ENCODE measurements at regions of chr11 and their contacts with region 1.

Region 1: GRCh38 chr11:10366568-10367370 is 61.9 kb downstream of the ADM start:
- DNase-seq: peak; percentile 68 to 87 (median 75)
- ATAC-seq: peak; percentile 99
- H3K4me3 ChIP-seq: no peak overlapping the region
- H3K27ac ChIP-seq: no peak overlapping the region
- H3K4me1 ChIP-seq: peaks cover 3 to 4% of the 10 kb centered on the region in 2 experiments; a peak in 3 of 5 replicates
- H3K27me3 ChIP-seq: peaks cover 0 to 4% of the 10 kb centered on the region in 2 experiments; a peak in 1 of 5 replicates
- CTCF ChIP-seq: peak; percentile 91 to 93 (median 91)
- EP300 ChIP-seq: 0 out of 2 replicates have a peak, but pooled peaks have one; percentile 14
- POLR2A ChIP-seq: no peak
- RAD21 ChIP-seq: peak; percentile 68 to 85

Region 2: DNA sequence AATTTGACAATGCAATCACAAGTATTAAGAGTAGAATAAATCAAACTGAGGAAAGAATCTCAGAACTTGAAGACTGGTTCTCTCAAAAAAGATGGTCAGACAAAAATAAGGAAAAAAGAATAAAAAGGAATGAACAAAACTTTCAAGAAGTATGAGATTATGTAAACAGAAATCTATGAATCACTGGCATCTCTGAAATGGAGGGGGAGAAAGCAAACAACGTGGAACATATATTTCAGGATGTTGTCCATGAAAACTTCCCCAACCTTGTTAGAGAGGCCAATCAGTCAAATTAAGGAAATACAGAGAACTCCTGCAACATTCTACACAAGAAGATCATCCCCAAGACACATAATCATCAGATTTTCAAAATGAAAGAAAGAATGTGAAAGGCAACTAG is 308.4 kb before region 1 on chr11:
- CTCF ChIA-PET with region 1: no interaction called
- POLR2A ChIA-PET with region 1: no interaction called
- in situ Hi-C with region 1: no loop called
- intact Hi-C with region 1: no loop called
- DNase-seq: no peak
- ATAC-seq: no peak
- H3K4me3 ChIP-seq: no peak overlapping the region
- H3K27ac ChIP-seq: no peak overlapping the region
- H3K4me1 ChIP-seq: no peaks in the 10 kb centered on the region
- H3K27me3 ChIP-seq: no peaks in the 10 kb centered on the region
- CTCF ChIP-seq: no peak
- EP300 ChIP-seq: no peak
- POLR2A ChIP-seq: no peak
- RAD21 ChIP-seq: no peak

Region 3: GRCh38 chr11:10208131-10208575 is 158.6 kb before region 1 on chr11:
- CTCF ChIA-PET with region 1: interaction called, 5 read pairs
- POLR2A ChIA-PET with region 1: no interaction called
- in situ Hi-C with region 1: no loop called
- intact Hi-C with region 1: loop called (anchors 5 kb)
- DNase-seq: peak; percentile 35 to 45 (median 40)
- ATAC-seq: peak; percentile 77
- H3K4me3 ChIP-seq: no peak overlapping the region
- H3K27ac ChIP-seq: no peak overlapping the region
- H3K4me1 ChIP-seq: no peaks in the 10 kb centered on the region
- H3K27me3 ChIP-seq: no peaks in the 10 kb centered on the region
- CTCF ChIP-seq: peak; percentile 47 to 73 (median 63); a peak in 5 of 6 replicates
- EP300 ChIP-seq: no peak
- POLR2A ChIP-seq: no peak
- RAD21 ChIP-seq: peak; percentile 58 to 67; a peak in 3 of 4 replicates

Region 4: GRCh38 chr11:10307442-10308207 is 59.1 kb before region 1 on chr11:
- CTCF ChIA-PET with region 1: no interaction called
- POLR2A ChIA-PET with region 1: no interaction called
- in situ Hi-C with region 1: no loop called
- intact Hi-C with region 1: loop called (anchors 1 kb)
- DNase-seq: peak; percentile 81 to 87 (median 84)
- ATAC-seq: peak; percentile 94
- H3K4me3 ChIP-seq: peak overlapping the region; percentile 32
- H3K27ac ChIP-seq: no peak overlapping the region; the same call in 2 of the 3 replicates
- H3K4me1 ChIP-seq: peaks cover 24 to 50% of the 10 kb centered on the region in 2 experiments
- H3K27me3 ChIP-seq: peaks cover 15 to 19% of the 10 kb centered on the region in 2 experiments
- CTCF ChIP-seq: peak; percentile 87 to 97 (median 88)
- EP300 ChIP-seq: no peak
- POLR2A ChIP-seq: no peak
- RAD21 ChIP-seq: peak; percentile 85 to 89

Region 5: GRCh38 chr11:10322830-10323792 is 43.7 kb before region 1 on chr11:
- CTCF ChIA-PET with region 1: no interaction called
- POLR2A ChIA-PET with region 1: no interaction called
- in situ Hi-C with region 1: no loop called
- intact Hi-C with region 1: loop called (anchors 5 kb)
- DNase-seq: peak; percentile 36 to 77 (median 51)
- ATAC-seq: peak; percentile 91
- H3K4me3 ChIP-seq: no peak overlapping the region
- H3K27ac ChIP-seq: no peak overlapping the region
- H3K4me1 ChIP-seq: peaks cover 0 to 5% of the 10 kb centered on the region in 2 experiments; a peak in 2 of 5 replicates
- H3K27me3 ChIP-seq: no peaks in the 10 kb centered on the region
- CTCF ChIP-seq: peak; percentile 46 to 82 (median 57); a peak in 4 of 6 replicates
- EP300 ChIP-seq: no peak; the same call in 1 of the 2 replicates
- POLR2A ChIP-seq: no peak
- RAD21 ChIP-seq: peak; percentile 71 to 72

Measured in K562 (cell line).